Left lung (tissue), 14 donors: ENCODE measurements at regions of chr7 and their contacts with region 1.

Region 1: DNA sequence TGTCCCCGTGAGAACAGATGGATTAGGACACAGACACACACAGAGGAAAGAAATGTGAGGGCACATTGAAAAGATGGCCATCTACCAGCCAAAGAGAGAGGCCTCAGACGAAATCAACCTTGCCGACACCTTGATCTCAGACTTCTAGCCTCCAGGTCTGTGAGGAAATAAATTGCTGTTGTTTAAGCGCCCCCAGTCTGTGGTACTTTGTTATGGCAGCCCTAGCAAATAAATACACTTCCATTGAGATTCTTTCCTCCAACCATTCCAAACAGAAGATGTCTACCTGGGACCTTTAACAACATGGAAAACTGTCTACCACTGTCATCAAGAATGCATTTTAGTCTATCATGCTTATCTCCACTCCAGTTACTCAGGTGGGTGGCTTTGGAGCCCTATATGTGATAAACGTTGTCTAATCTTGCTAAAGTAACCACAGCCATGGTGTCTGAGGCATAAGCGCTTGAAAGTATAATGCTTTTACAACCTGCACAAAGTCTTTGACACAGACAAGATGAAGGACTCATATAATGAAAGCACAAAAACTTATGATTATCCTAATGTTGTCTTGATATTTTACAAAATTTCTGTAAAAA is 244.3 kb downstream of the MTERF1 start:
- DNase-seq: peak in 1 of 4 donors; percentile 23
- ATAC-seq: peak; percentile 78
- H3K4me3 ChIP-seq: no peak overlapping the region
- H3K27ac ChIP-seq: no peak overlapping the region
- H3K4me1 ChIP-seq: no peaks in the 10 kb centered on the region
- H3K27me3 ChIP-seq: no peaks in the 10 kb centered on the region
- CTCF ChIP-seq: peak; percentile 24 to 45

Region 2: GRCh38 chr7:91089382-91089963 is 546.8 kb before region 1 on chr7:
- intact Hi-C with region 1: loop called in 1 of 2 experiments (anchors 10 kb)
- DNase-seq: peak in 2 of 4 donors; percentile 65 to 71
- ATAC-seq: peak; percentile 91
- H3K4me3 ChIP-seq: no peak overlapping the region
- H3K27ac ChIP-seq: no peak overlapping the region
- H3K4me1 ChIP-seq: no peaks in the 10 kb centered on the region
- H3K27me3 ChIP-seq: no peaks in the 10 kb centered on the region
- CTCF ChIP-seq: peak; percentile 60 to 71